HepG2 (cell line): ENCODE measurements at regions of chr4 and their contacts with region 1.

Region 1: GRCh38 chr4:177250056-177250696 is 59.5 kb upstream of the NEIL3 start:
- DNase-seq: peak; percentile 24
- ATAC-seq: peak; percentile 99
- H3K4me3 ChIP-seq: no peak overlapping the region
- H3K27ac ChIP-seq: no peak overlapping the region
- H3K4me1 ChIP-seq: no peaks in the 10 kb centered on the region
- H3K27me3 ChIP-seq: no peaks in the 10 kb centered on the region
- CTCF ChIP-seq: peak; percentile 96
- EP300 ChIP-seq: no peak
- POLR2A ChIP-seq: no peak
- RAD21 ChIP-seq: peak; percentile 84

Region 2: GRCh38 chr4:176377780-176378179 is 872.4 kb before region 1 on chr4:
- CTCF ChIA-PET with region 1: no interaction called
- POLR2A ChIA-PET with region 1: no interaction called
- in situ Hi-C with region 1: no loop called
- intact Hi-C with region 1: no loop called
- DNase-seq: no peak
- ATAC-seq: peak; percentile 45; the same call in 2 of the 3 replicates
- H3K4me3 ChIP-seq: no peak overlapping the region
- H3K27ac ChIP-seq: no peak overlapping the region
- H3K4me1 ChIP-seq: 0 out of 2 replicates have a peak, but pooled peaks cover 4% of the 10 kb centered on the region
- H3K27me3 ChIP-seq: no peaks in the 10 kb centered on the region; a peak in 1 of 5 replicates
- CTCF ChIP-seq: peak; percentile 50
- EP300 ChIP-seq: no peak
- POLR2A ChIP-seq: no peak
- RAD21 ChIP-seq: no peak

Region 3: DNA sequence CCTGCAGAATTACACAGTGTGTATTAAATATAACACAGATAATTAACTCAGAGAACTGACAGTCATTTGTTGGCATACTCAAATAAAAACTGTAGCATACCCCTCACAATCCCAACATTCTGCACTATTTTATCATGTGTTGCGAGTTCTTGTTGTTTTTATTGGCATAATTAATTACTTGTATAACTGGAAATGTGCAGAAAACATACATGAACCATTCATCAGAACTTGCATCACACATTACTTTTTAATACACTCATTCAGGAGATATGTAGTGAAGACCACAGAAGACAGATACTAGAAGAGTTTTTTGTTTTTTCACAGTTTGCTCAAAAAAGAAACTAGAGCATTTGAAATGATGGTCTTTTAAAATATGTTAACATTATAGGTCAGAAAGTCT is 15.2 kb before region 1 on chr4:
- CTCF ChIA-PET with region 1: no interaction called
- POLR2A ChIA-PET with region 1: no interaction called
- in situ Hi-C with region 1: no loop called
- intact Hi-C with region 1: no loop called
- DNase-seq: no peak
- ATAC-seq: no peak
- H3K4me3 ChIP-seq: no peak overlapping the region
- H3K27ac ChIP-seq: no peak overlapping the region
- H3K4me1 ChIP-seq: no peaks in the 10 kb centered on the region
- H3K27me3 ChIP-seq: no peaks in the 10 kb centered on the region
- CTCF ChIP-seq: no peak
- EP300 ChIP-seq: no peak
- POLR2A ChIP-seq: no peak
- RAD21 ChIP-seq: no peak

Region 4: GRCh38 chr4:177263818-177264217 is 13.6 kb after region 1 on chr4:
- CTCF ChIA-PET with region 1: no interaction called
- POLR2A ChIA-PET with region 1: no interaction called
- in situ Hi-C with region 1: no loop called
- intact Hi-C with region 1: loop called (anchors 2 kb)
- DNase-seq: no peak
- ATAC-seq: no peak
- H3K4me3 ChIP-seq: no peak overlapping the region
- H3K27ac ChIP-seq: no peak overlapping the region
- H3K4me1 ChIP-seq: peaks cover 6% of the 10 kb centered on the region; the same call in 1 of the 2 replicates
- H3K27me3 ChIP-seq: no peaks in the 10 kb centered on the region
- CTCF ChIP-seq: no peak
- EP300 ChIP-seq: no peak
- POLR2A ChIP-seq: no peak
- RAD21 ChIP-seq: no peak

Region 5: DNA sequence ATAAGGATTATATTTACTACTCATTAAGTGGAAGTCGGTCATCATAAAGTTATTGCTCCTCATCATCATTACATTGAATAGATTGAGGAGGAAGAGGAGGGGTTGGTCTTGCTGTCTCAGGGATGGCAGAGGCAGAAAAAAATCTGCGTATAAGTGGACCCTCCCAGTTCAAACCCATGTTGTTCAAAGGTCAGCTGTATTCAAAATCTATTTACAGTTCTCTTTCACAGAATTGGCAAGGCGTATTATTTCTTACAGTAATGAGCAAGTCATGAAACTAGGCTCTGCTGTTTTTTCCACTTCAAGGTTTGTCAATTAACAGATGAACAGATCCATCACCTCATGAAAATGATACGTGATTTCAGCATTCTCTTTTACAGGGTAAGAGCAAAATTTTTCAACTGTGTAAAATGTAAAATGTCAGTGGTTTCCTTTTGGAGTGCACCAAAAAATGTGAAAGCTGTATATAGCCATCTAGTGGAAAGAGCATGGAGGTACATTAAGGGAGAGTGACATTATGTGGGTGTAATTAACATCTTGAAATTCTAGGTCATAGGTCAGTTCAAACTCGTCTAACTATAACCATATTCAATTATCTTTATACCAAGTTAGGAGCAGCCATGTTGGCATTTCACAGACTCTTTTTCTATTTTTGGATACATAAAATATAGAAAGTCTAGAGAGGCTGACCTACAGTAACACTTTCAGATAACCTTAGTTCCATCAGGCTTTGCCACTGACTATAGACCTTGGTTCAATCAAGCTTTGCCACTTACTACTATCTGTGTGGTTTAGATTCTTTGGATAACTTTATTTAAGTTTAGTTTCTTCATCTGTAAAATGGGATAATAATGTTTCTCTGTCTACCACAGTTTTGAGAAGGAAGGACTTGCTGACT is 89.5 kb after region 1 on chr4:
- CTCF ChIA-PET with region 1: interaction called, 28 read pairs
- POLR2A ChIA-PET with region 1: no interaction called
- in situ Hi-C with region 1: loop called (anchors 5 kb)
- intact Hi-C with region 1: loop called (anchors 1 kb)
- DNase-seq: peak; percentile 29
- ATAC-seq: peak; percentile 89
- H3K4me3 ChIP-seq: no peak overlapping the region
- H3K27ac ChIP-seq: no peak overlapping the region
- H3K4me1 ChIP-seq: 0 out of 2 replicates have a peak, but pooled peaks cover 6% of the 10 kb centered on the region
- H3K27me3 ChIP-seq: no peaks in the 10 kb centered on the region
- CTCF ChIP-seq: peak; percentile 57
- EP300 ChIP-seq: no peak
- POLR2A ChIP-seq: no peak
- RAD21 ChIP-seq: peak; percentile 34; the same call in 1 of the 2 replicates

Region 6: GRCh38 chr4:177380730-177381287 is 130.6 kb after region 1 on chr4:
- CTCF ChIA-PET with region 1: interaction called, 3 read pairs
- POLR2A ChIA-PET with region 1: no interaction called
- in situ Hi-C with region 1: no loop called
- intact Hi-C with region 1: loop called (anchors 1 kb)
- DNase-seq: peak; percentile 64
- ATAC-seq: peak; percentile 100
- H3K4me3 ChIP-seq: no peak overlapping the region; a peak in 1 of 6 replicates
- H3K27ac ChIP-seq: no peak overlapping the region
- H3K4me1 ChIP-seq: 0 out of 2 replicates have a peak, but pooled peaks cover 5% of the 10 kb centered on the region
- H3K27me3 ChIP-seq: no peaks in the 10 kb centered on the region
- CTCF ChIP-seq: peak; percentile 84
- EP300 ChIP-seq: no peak
- POLR2A ChIP-seq: no peak
- RAD21 ChIP-seq: no peak; the same call in 1 of the 2 replicates

Region 7: DNA sequence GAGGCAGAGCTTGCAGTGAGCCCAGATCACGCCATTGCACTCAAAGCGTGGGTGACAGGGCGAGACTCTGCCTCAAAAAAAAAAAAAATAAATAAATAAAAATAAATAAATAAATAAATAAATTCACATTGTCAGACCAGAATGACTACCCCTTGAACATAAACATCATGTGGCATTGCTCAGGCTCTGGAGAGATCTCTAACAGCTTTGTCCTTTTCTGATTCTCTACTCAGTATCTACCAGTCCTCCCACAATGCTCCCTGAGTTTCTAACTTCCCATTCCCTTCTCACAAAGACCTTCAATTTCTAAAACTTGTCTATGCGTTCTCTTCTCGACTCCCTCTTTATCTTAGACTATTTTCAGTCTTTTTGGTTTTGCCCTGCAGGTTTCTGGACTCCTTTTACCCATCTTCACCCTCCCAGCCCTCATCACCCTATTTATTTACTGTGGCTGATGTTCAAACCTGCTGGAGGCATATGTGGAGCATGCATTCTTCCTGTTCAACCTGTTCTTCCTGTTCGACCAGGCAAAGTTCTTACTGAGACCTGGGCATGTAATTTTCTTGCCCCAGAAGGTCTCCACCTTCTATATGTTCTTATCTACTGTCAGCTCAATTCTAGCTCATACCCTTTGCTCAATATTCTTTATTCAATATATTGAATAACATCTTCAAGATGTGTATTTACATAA is 261.3 kb after region 1 on chr4:
- CTCF ChIA-PET with region 1: no interaction called
- POLR2A ChIA-PET with region 1: no interaction called
- in situ Hi-C with region 1: no loop called
- intact Hi-C with region 1: no loop called
- DNase-seq: no peak
- ATAC-seq: no peak
- H3K4me3 ChIP-seq: no peak overlapping the region
- H3K27ac ChIP-seq: no peak overlapping the region
- H3K4me1 ChIP-seq: no peaks in the 10 kb centered on the region
- H3K27me3 ChIP-seq: no peaks in the 10 kb centered on the region; a peak in 1 of 5 replicates
- CTCF ChIP-seq: no peak
- EP300 ChIP-seq: no peak
- POLR2A ChIP-seq: no peak
- RAD21 ChIP-seq: no peak

Region 8: GRCh38 chr4:177555007-177555574 is 304.9 kb after region 1 on chr4:
- CTCF ChIA-PET with region 1: no interaction called
- POLR2A ChIA-PET with region 1: no interaction called
- in situ Hi-C with region 1: no loop called
- intact Hi-C with region 1: loop called (anchors 10 kb)
- DNase-seq: no peak
- ATAC-seq: no peak
- H3K4me3 ChIP-seq: no peak overlapping the region
- H3K27ac ChIP-seq: no peak overlapping the region
- H3K4me1 ChIP-seq: no peaks in the 10 kb centered on the region
- H3K27me3 ChIP-seq: no peaks in the 10 kb centered on the region
- CTCF ChIP-seq: peak; percentile 60
- EP300 ChIP-seq: no peak
- POLR2A ChIP-seq: no peak
- RAD21 ChIP-seq: 0 out of 2 replicates have a peak, but pooled peaks have one; percentile 12